GM10248 (cell line): ENCODE measurements at regions of chr20 and their contacts with region 1.

Region 1: GRCh38 chr20:49384437-49385088 is 97.9 kb downstream of the KCNB1 start:
- DNase-seq: peak; percentile 65
- CTCF ChIP-seq: peak; percentile 51

Region 2: DNA sequence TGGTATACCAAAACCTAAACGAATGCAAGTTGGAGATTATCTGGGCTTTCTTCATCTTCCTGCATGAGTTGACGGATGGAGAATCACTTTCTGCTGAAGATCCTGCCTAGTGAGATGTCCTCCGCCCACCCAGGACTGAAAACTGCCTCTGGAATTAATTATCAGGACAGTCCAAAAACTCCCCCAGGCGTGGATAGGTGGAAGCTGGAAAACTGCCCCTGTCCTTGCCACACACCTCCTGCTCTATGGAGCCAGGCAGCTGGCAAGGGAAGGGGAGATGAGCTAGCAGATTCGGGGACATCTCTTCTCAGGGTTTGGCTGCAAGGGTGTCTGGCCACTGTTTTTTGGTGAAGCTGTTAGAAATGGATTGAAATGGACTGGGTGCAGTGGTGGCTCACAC is 17.4 kb before region 1 on chr20:
- CTCF ChIA-PET with region 1: interaction called, 14 read pairs
- POLR2A ChIA-PET with region 1: no interaction called
- DNase-seq: no peak
- CTCF ChIP-seq: no peak

Region 3: DNA sequence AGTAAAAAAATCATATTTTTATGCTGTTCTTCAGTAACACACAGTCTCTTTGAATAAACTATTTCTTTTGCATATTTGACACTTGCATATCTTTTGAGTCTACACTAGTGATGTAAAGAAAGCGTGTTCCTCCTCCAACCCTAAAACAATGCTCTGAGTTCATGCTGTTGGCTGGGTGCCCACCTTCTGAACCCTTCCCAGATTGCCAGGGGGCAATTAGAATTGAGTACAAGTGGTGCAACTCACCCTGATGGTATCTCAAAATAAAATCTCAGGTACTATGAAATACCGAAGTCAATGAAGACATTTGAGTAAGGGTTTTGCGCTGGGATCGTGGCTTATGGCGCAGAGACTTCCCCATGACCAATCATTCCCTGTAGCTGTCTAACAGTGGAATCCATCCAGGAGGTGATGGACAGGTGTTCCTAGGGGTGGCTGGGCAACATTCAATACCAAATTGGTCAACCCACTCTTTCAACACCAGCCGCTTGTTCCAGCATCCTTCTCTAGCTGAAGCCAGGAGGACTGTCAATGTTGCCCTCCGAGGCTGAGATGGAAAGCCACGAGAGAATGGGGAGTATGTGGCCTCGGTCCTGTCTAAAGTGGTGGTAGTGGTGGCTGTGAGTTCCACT is 12.4 kb before region 1 on chr20:
- CTCF ChIA-PET with region 1: interaction called, 14 read pairs
- POLR2A ChIA-PET with region 1: no interaction called
- DNase-seq: no peak
- CTCF ChIP-seq: no peak

Region 4: DNA sequence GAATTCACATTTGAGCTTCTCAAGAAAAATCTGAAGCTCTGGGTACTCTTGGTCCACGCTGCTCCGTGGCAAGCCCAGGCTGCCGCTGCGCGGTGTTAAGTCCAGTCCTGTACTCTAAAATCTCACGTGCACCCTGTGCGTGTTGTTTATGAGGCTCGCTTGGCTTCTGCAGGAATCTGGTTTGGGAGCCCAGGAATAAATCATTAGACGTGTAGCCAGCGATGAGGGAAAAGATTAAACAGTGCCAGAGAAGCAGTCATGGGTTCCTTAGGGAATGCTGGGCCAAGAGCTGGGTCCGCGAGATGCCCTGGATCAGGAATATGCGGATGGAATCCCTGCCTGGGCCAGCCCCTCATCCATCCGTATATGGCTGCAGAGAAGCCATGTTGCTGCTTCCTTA is 10.6 kb after region 1 on chr20:
- CTCF ChIA-PET with region 1: interaction called, 16 read pairs
- POLR2A ChIA-PET with region 1: no interaction called
- DNase-seq: no peak
- CTCF ChIP-seq: no peak

Region 5: DNA sequence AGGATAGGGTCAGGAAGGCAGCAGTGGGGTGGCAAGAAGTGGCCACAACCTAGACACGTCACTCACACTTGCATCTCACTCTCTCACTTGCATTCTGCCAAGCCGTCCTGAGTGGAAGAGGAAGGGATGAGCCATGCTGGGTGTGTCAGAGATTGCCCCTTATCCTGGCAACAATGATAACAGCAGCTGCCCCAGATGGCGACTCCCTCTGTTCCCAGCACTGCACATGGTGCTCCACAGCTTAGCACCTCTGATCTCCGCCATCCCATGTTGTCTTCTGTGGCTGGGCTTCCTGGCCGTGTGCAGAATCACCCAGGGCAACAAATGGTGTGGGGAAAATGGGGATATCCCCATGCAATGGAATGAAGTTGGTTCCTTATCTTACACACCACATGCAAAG is 86.8 kb after region 1 on chr20:
- CTCF ChIA-PET with region 1: no interaction called
- POLR2A ChIA-PET with region 1: no interaction called
- DNase-seq: no peak
- CTCF ChIP-seq: no peak

Region 6: GRCh38 chr20:49484180-49485140 is 99.9 kb after region 1 on chr20:
- CTCF ChIA-PET with region 1: interaction called, 13 read pairs
- POLR2A ChIA-PET with region 1: no interaction called
- DNase-seq: peak; percentile 77
- CTCF ChIP-seq: peak; percentile 63